ENCODE measurements at regions of chr4 and their contacts with region 1.

Region 1: GRCh38 chr4:153791746-153792617 is 3.1 kb upstream of the SFRP2 start:
- DNase-seq: peak in 4 of 14 experiments; percentile 10 to 36 (median 32)
- ATAC-seq: peak; percentile 20
- H3K4me3 ChIP-seq: peak overlapping the region; percentile 36
- H3K4me3 Mint-ChIP-seq: peak overlapping the region; percentile 81
- H3K27ac ChIP-seq: no peak overlapping the region
- H3K27ac Mint-ChIP-seq: no peak overlapping the region
- H3K4me1 ChIP-seq: peaks cover 48% of the 10 kb centered on the region
- H3K4me1 Mint-ChIP-seq: peaks cover 46% of the 10 kb centered on the region
- H3K27me3 ChIP-seq: peaks cover 59 to 72% of the 10 kb centered on the region in 2 experiments
- H3K27me3 Mint-ChIP-seq: peaks cover 98% of the 10 kb centered on the region
- CTCF ChIP-seq: no peak

Region 2: GRCh38 chr4:154349829-154350228 is 557.8 kb after region 1 on chr4:
- CTCF ChIA-PET with region 1: no interaction called
- POLR2A ChIA-PET with region 1: no interaction called
- intact Hi-C with region 1: loop called (anchors 5 to 10 kb)
- DNase-seq: peak in 2 of 14 experiments; percentile 11 to 19
- ATAC-seq: no peak
- H3K4me3 ChIP-seq: no peak overlapping the region
- H3K4me3 Mint-ChIP-seq: no peak overlapping the region
- H3K27ac ChIP-seq: no peak overlapping the region
- H3K27ac Mint-ChIP-seq: no peak overlapping the region
- H3K4me1 ChIP-seq: no peaks in the 10 kb centered on the region
- H3K4me1 Mint-ChIP-seq: no peaks in the 10 kb centered on the region
- H3K27me3 ChIP-seq: peaks cover 0 to under 1% of the 10 kb centered on the region in 2 experiments
- H3K27me3 Mint-ChIP-seq: peaks cover 14% of the 10 kb centered on the region
- CTCF ChIP-seq: peak; percentile 46

Region 3: GRCh38 chr4:155197757-155198156 is 1405.8 kb after region 1 on chr4:
- CTCF ChIA-PET with region 1: no interaction called
- POLR2A ChIA-PET with region 1: no interaction called
- intact Hi-C with region 1: no loop called
- DNase-seq: no peak
- ATAC-seq: no peak
- H3K4me3 ChIP-seq: no peak overlapping the region
- H3K4me3 Mint-ChIP-seq: no peak overlapping the region
- H3K27ac ChIP-seq: no peak overlapping the region
- H3K27ac Mint-ChIP-seq: no peak overlapping the region
- H3K4me1 ChIP-seq: no peaks in the 10 kb centered on the region
- H3K4me1 Mint-ChIP-seq: no peaks in the 10 kb centered on the region
- H3K27me3 ChIP-seq: no peaks in the 10 kb centered on the region
- H3K27me3 Mint-ChIP-seq: peaks cover 7% of the 10 kb centered on the region
- CTCF ChIP-seq: no peak